Heart right ventricle (tissue), 16 donors: ENCODE measurements at regions of chr17 and their contacts with region 1.

Region 1: DNA sequence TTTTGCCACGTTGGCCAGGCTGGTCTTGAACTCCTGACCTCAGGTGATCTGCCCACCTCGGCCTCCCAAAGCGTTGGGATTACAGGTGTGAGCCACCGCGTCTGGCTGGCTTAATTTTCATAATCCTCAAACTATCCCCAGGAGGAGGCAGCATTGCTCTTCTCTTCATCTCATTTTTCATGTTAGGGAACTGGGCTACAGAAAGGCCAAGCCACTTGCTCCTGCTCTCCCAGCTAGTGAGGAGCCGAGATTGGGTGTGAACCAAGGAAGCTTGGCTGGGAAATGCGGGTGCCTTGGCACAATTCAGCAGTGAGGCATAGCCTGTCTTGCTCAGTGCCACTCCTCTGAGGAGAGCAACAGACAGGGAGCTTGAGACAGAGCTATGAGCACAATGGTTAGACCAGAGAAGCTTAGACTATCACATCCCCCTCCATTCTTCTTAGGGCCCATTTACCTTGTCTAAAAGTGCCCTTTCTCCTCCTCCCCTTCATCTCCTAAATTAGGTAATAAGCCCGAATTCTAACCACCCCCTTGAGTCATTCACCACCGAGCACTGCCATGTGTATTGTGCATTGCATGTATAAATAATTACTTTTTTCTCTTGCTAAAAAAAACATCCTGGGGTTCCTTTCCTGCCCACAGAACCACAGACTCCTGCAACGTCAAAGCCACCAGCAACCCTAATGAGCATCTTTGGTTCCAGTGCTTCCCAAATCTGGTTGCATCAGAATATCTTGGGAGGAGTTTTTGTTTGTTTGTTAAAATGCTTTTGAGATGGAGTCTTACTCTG is 20.0 kb upstream of the KIF19 start:
- DNase-seq: no peak
- ATAC-seq: peak in 1 of 8 donors; percentile 21
- H3K4me3 ChIP-seq: no peak overlapping the region
- H3K27ac ChIP-seq: no peak overlapping the region
- H3K4me1 ChIP-seq: peaks cover 0 to 14% (median 4%) of the 10 kb centered on the region in 9 donors
- H3K27me3 ChIP-seq: no peaks in the 10 kb centered on the region
- CTCF ChIP-seq: peak in 5 of 9 donors; percentile 10 to 33 (median 23)

Region 2: GRCh38 chr17:74354123-74354522 is 48.1 kb after region 1 on chr17:
- intact Hi-C with region 1: loop called in 3 of 10 experiments (anchors 5 kb)
- DNase-seq: peak in 1 of 2 donors; percentile 54
- ATAC-seq: peak in 5 of 8 donors; percentile 53 to 70 (median 64)
- H3K4me3 ChIP-seq: no peak overlapping the region
- H3K27ac ChIP-seq: no peak overlapping the region
- H3K4me1 ChIP-seq: peaks cover 0 to 12% (median 9%) of the 10 kb centered on the region in 9 donors
- H3K27me3 ChIP-seq: peaks cover 12 to 99% (median 92%) of the 10 kb centered on the region in 7 donors
- CTCF ChIP-seq: peak in 7 of 9 donors; percentile 34 to 74 (median 62)

Region 3: GRCh38 chr17:74361230-74362068 is 55.4 kb after region 1 on chr17 and contains the start of gene BTBD17:
- intact Hi-C with region 1: loop called in 9 of 10 experiments (anchors 1 to 5 kb)
- DNase-seq: peak; percentile 46 to 70
- ATAC-seq: peak; percentile 75 to 90 (median 82)
- H3K4me3 ChIP-seq: no peak within 1 kb of the TSS
- H3K27ac ChIP-seq: no peak within 1 kb of the TSS
- H3K4me1 ChIP-seq: peaks cover 0 to 18% (median 9%) of the 10 kb centered on the region in 9 donors
- H3K27me3 ChIP-seq: peaks cover 9 to 66% (median 61%) of the 10 kb centered on the region in 7 donors
- CTCF ChIP-seq: peak; percentile 52 to 83 (median 79)
- total RNA-seq, gene BTBD17: not detected

Region 4: GRCh38 chr17:74457146-74457819 is 151.2 kb after region 1 on chr17:
- intact Hi-C with region 1: loop called in 2 of 10 experiments (anchors 10 kb)
- DNase-seq: peak; percentile 81 to 84
- ATAC-seq: peak in 5 of 8 donors; percentile 17 to 28 (median 23)
- H3K4me3 ChIP-seq: peak overlapping the region in 3 of 10 donors; percentile 4 to 21 (median 8)
- H3K27ac ChIP-seq: peak overlapping the region in 5 of 10 donors; percentile 13 to 47 (median 28)
- H3K4me1 ChIP-seq: peaks cover 23 to 56% (median 40%) of the 10 kb centered on the region in 9 donors
- H3K27me3 ChIP-seq: peaks cover 0 to 9% (median 0%) of the 10 kb centered on the region in 7 donors
- CTCF ChIP-seq: peak; percentile 91 to 99 (median 96)

Region 5: GRCh38 chr17:74493381-74493833 is 187.3 kb after region 1 on chr17:
- intact Hi-C with region 1: loop called in 2 of 10 experiments (anchors 5 to 10 kb)
- DNase-seq: peak; percentile 65 to 66
- ATAC-seq: peak; percentile 64 to 85 (median 73)
- H3K4me3 ChIP-seq: no peak overlapping the region
- H3K27ac ChIP-seq: no peak overlapping the region
- H3K4me1 ChIP-seq: no peaks in the 10 kb centered on the region
- H3K27me3 ChIP-seq: peaks cover 0 to 16% (median 0%) of the 10 kb centered on the region in 7 donors
- CTCF ChIP-seq: peak; percentile 68 to 90 (median 85)